IMR-90 (cell line): ENCODE measurements at regions of chr15 and their contacts with region 1.

Region 1: DNA sequence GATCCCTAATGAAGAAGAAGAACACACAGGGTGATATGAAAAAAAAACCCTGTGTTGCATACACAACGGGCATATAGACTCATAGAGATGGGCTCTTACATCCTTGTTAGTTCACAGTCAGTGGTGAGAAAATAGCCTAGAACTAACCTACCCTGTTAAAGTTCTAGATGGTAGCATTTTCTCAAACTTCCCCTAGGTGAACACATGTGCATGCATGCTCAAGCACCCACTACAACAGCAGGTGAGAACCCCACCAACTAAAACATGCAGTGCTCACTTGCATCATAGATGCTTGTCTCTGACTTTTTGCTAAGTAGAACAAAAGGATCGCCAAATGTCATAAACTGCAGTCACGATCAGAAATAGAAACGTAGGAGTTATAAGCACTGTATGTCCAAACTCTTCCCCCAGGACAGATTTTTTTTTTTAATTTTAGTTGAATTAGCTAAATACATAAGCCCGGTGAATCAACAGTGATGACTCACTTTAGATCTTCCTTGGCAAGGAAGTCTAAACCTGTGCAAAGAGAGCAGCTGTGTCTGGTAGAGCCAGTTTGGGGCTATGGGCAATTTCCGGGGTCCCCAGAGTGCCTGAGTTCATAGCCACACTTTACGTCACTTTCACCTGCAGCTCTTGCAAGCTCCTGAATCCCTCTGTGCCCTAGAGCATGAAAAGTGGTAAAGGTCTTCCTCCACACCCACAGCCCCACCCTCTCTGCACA is 96.2 kb upstream of the SEMA6D start:
- DNase-seq: peak; percentile 50
- ATAC-seq: no peak
- H3K4me3 ChIP-seq: no peak overlapping the region
- H3K27ac ChIP-seq: no peak overlapping the region
- H3K4me1 ChIP-seq: no peaks in the 10 kb centered on the region
- H3K27me3 ChIP-seq: no peaks in the 10 kb centered on the region; the same call in 1 of the 2 replicates
- CTCF ChIP-seq: no peak
- POLR2A ChIP-seq: no peak
- RAD21 ChIP-seq: no peak

Region 2: GRCh38 chr15:47374222-47374621 is 246.9 kb before region 1 on chr15:
- CTCF ChIA-PET with region 1: no interaction called
- POLR2A ChIA-PET with region 1: interaction called, 10 read pairs
- dilution Hi-C with region 1: no loop called
- in situ Hi-C with region 1: no loop called
- intact Hi-C with region 1: no loop called
- DNase-seq: peak; percentile 42
- ATAC-seq: peak; percentile 48; the same call in 1 of the 2 replicates
- H3K4me3 ChIP-seq: no peak overlapping the region
- H3K27ac ChIP-seq: no peak overlapping the region
- H3K4me1 ChIP-seq: peaks cover 3% of the 10 kb centered on the region; the same call in 1 of the 2 replicates
- H3K27me3 ChIP-seq: no peaks in the 10 kb centered on the region
- CTCF ChIP-seq: peak; percentile 59
- POLR2A ChIP-seq: no peak
- RAD21 ChIP-seq: peak; percentile 74

Region 3: DNA sequence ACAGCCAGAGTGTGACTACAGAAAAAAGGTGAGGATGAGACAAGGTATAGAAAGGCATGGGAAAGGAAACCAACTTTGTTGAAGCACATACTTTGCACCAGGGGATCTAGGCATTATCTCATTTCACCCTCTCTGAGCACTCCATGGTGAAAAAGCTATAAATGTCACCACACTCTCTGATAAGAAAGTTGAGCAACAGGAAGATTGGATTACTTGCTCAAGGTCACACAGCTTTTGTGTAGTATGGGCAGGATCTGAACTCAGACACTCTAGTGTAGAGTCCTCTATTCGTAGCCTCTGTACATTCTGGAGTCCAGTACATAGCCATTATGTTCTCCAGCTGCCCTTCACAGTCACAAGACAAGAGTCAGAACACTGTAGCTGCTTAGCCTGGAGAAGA is 67.2 kb before region 1 on chr15:
- CTCF ChIA-PET with region 1: no interaction called
- POLR2A ChIA-PET with region 1: no interaction called
- dilution Hi-C with region 1: no loop called
- in situ Hi-C with region 1: no loop called
- intact Hi-C with region 1: no loop called
- DNase-seq: no peak
- ATAC-seq: no peak
- H3K4me3 ChIP-seq: no peak overlapping the region
- H3K27ac ChIP-seq: no peak overlapping the region
- H3K4me1 ChIP-seq: no peaks in the 10 kb centered on the region
- H3K27me3 ChIP-seq: no peaks in the 10 kb centered on the region; the same call in 1 of the 2 replicates
- CTCF ChIP-seq: no peak
- POLR2A ChIP-seq: no peak
- RAD21 ChIP-seq: no peak